ENCODE measurements at regions of chr4 and their contacts with region 1.

Region 1: DNA sequence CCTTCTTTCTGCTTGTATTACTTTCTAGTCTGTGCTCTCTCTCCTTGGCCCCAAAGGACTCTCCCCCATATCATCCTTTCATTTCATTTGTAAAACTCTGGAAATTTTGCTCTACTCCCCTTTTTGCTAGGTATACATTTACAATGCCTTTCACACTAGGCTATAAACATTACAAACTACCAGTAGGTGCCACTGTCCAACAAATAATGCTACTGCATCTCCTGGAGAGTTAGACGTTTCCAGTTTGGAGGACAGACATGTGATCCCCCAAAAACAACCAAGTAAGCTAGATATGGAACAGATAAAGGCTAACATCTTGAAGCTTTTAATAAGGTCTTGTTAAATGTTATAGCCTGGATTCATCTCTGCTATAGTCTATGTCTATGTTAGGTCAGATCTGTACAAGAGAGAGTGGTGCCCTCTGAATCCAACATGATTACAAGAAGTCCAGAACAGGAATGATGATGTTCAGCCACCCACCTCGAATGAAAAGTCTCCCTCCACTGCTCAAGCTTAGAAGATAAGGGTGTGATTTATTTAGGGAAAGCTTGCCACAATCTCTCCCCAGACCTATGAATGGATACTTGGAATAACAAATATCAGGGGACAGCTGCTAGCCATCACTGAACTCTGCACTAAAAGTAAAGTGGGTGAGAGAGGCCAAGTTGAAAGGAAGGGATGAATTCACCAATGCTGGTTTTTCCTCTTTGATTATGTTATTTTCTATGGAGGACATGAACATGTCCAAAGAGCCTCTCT is 14.3 kb downstream of the CBR4 start:
- DNase-seq: no peak
- ATAC-seq: peak; percentile 38; the same call in 1 of the 3 replicates
- H3K4me3 ChIP-seq: no peak overlapping the region
- H3K27ac ChIP-seq: no peak overlapping the region
- H3K4me1 ChIP-seq: no peaks in the 10 kb centered on the region
- H3K27me3 ChIP-seq: no peaks in the 10 kb centered on the region
- CTCF ChIP-seq: peak in 1 of 3 experiments; percentile 14; a peak in 1 of 6 replicates
- EP300 ChIP-seq: no peak
- POLR2A ChIP-seq: no peak
- RAD21 ChIP-seq: peak; percentile 38; the same call in 1 of the 2 replicates

Region 2: GRCh38 chr4:169010125-169011023 is 14.7 kb after region 1 on chr4 and contains the start of gene CBR4:
- CTCF ChIA-PET with region 1: interaction called, 30 read pairs
- POLR2A ChIA-PET with region 1: interaction called, 8 read pairs
- RAD21 ChIA-PET with region 1: interaction called, 15 read pairs
- SMC1A ChIA-PET with region 1: interaction called, 47 read pairs
- in situ Hi-C with region 1: no loop called
- intact Hi-C with region 1: no loop called
- DNase-seq: peak; percentile 94
- ATAC-seq: peak; percentile 96
- H3K4me3 ChIP-seq: peak within 1 kb of the TSS; percentile 86
- H3K27ac ChIP-seq: peak within 1 kb of the TSS; percentile 91
- H3K4me1 ChIP-seq: no peaks in the 10 kb centered on the region
- H3K27me3 ChIP-seq: no peaks in the 10 kb centered on the region
- CTCF ChIP-seq: peak; percentile 6 to 36 (median 35); a peak in 2 of 6 replicates
- EP300 ChIP-seq: no peak; a peak in 1 of 4 replicates
- POLR2A ChIP-seq: peak; percentile 86
- RAD21 ChIP-seq: 0 out of 2 replicates have a peak, but pooled peaks have one; percentile 11
- polyA plus RNA-seq, gene CBR4: 21.4 to 36.2 TPM

Region 3: DNA sequence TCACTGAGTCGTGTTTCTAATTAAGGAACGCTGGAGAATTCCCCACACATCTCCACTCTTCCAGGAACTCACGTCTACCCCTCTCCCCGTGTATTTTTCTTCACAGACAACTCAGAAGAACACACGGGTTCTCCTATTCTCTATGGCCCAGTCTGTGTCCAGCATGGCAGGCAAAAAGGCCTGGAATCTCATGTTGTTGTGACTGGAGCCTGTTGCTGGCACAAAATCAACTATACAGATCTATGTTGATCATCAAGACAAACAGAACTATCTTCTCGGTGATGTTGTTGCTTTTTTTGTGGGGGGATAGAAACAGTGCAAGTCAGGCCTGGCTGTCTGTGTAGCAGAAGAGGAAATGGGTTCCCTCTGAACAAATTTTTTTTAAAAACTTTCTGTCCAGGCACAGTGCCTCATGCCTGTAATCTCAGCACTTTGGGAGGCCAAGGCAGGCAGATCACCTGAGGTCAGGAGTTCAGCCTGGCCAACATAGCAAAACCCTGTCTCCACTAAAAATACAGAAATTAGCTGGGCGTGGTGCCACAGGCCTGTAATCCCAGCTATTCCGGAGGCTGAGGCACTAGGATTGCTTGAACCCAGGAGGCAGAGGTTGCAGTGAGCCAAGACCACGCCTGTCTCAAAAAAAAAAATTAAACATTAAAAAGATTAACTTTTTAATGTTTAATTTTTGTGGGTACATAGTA is 64.8 kb after region 1 on chr4:
- CTCF ChIA-PET with region 1: no interaction called
- POLR2A ChIA-PET with region 1: no interaction called
- RAD21 ChIA-PET with region 1: no interaction called
- SMC1A ChIA-PET with region 1: no interaction called
- in situ Hi-C with region 1: no loop called
- intact Hi-C with region 1: no loop called
- DNase-seq: no peak
- ATAC-seq: no peak
- H3K4me3 ChIP-seq: no peak overlapping the region
- H3K27ac ChIP-seq: no peak overlapping the region
- H3K4me1 ChIP-seq: no peaks in the 10 kb centered on the region
- H3K27me3 ChIP-seq: no peaks in the 10 kb centered on the region
- CTCF ChIP-seq: no peak
- EP300 ChIP-seq: no peak
- POLR2A ChIP-seq: no peak
- RAD21 ChIP-seq: no peak